Caco-2 (cell line): ENCODE measurements at regions of chr17 and their contacts with region 1.

Region 1: GRCh38 chr17:17942846-17943245 is 29.4 kb downstream of the TOM1L2 start:
- DNase-seq: peak in 1 of 2 experiments; percentile 28
- H3K4me3 ChIP-seq: no peak overlapping the region
- H3K4me3 Mint-ChIP-seq: peak overlapping the region; percentile 51
- H3K27ac Mint-ChIP-seq: peak overlapping the region; percentile 84
- H3K4me1 ChIP-seq: peaks cover 80% of the 10 kb centered on the region
- H3K4me1 Mint-ChIP-seq: peaks cover 57% of the 10 kb centered on the region
- H3K27me3 ChIP-seq: no peaks in the 10 kb centered on the region
- H3K27me3 Mint-ChIP-seq: no peaks in the 10 kb centered on the region
- CTCF ChIP-seq: no peak

Region 2: GRCh38 chr17:17959520-17960361 is 16.9 kb after region 1 on chr17:
- CTCF ChIA-PET with region 1: interaction called, 3 read pairs
- POLR2A ChIA-PET with region 1: no interaction called
- intact Hi-C with region 1: loop called (anchors 2 kb)
- DNase-seq: no peak
- H3K4me3 ChIP-seq: no peak overlapping the region
- H3K4me3 Mint-ChIP-seq: peak overlapping the region; percentile 65
- H3K27ac Mint-ChIP-seq: peak overlapping the region; percentile 80
- H3K4me1 ChIP-seq: peaks cover 50% of the 10 kb centered on the region
- H3K4me1 Mint-ChIP-seq: peaks cover 44% of the 10 kb centered on the region
- H3K27me3 ChIP-seq: no peaks in the 10 kb centered on the region
- H3K27me3 Mint-ChIP-seq: no peaks in the 10 kb centered on the region
- CTCF ChIP-seq: no peak

Region 3: DNA sequence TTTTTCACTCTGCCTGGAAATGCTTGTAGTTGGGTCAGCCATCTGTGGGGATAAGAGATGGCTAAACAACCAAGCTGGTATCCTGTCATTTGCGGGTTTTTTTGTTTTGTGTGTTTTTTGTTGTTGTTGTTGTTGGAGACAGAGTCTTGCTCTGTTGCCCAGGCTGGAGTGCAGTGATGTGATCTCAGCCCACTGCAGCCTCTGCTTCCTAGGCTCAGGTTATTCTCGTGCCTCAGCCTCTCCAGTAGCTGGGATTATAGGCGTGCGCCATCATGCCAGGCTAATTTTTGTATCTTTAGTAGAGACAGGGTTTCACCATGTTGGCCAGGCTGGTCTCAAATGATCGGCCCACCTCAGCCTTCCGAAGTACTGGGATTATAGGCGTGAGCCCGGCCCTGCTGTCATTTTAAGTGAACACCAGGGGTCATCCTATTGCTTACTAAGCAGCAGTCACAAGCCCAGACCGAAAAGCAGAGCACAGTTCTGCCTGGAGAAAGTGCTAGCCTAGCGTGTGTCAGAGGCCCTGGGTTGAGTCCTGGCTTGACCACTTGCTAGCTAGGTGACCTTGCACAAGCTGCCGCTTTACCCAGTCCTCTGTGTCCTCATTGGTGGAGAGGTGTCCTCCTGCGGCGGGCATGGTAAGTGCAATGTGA is 376.9 kb after region 1 on chr17:
- CTCF ChIA-PET with region 1: no interaction called
- POLR2A ChIA-PET with region 1: no interaction called
- intact Hi-C with region 1: no loop called
- DNase-seq: peak; percentile 43 to 51
- H3K4me3 ChIP-seq: no peak overlapping the region
- H3K4me3 Mint-ChIP-seq: no peak overlapping the region
- H3K27ac Mint-ChIP-seq: no peak overlapping the region
- H3K4me1 ChIP-seq: peaks cover 9% of the 10 kb centered on the region
- H3K4me1 Mint-ChIP-seq: peaks cover 7% of the 10 kb centered on the region
- H3K27me3 ChIP-seq: no peaks in the 10 kb centered on the region
- H3K27me3 Mint-ChIP-seq: no peaks in the 10 kb centered on the region
- CTCF ChIP-seq: peak; percentile 20 to 52